Activated CD4-positive, alpha-beta memory T cell treated with anti-CD3 and anti-CD28 coated beads for 36 hours (primary cell): ENCODE measurements at regions of chr7 and their contacts with region 1.

Region 1: DNA sequence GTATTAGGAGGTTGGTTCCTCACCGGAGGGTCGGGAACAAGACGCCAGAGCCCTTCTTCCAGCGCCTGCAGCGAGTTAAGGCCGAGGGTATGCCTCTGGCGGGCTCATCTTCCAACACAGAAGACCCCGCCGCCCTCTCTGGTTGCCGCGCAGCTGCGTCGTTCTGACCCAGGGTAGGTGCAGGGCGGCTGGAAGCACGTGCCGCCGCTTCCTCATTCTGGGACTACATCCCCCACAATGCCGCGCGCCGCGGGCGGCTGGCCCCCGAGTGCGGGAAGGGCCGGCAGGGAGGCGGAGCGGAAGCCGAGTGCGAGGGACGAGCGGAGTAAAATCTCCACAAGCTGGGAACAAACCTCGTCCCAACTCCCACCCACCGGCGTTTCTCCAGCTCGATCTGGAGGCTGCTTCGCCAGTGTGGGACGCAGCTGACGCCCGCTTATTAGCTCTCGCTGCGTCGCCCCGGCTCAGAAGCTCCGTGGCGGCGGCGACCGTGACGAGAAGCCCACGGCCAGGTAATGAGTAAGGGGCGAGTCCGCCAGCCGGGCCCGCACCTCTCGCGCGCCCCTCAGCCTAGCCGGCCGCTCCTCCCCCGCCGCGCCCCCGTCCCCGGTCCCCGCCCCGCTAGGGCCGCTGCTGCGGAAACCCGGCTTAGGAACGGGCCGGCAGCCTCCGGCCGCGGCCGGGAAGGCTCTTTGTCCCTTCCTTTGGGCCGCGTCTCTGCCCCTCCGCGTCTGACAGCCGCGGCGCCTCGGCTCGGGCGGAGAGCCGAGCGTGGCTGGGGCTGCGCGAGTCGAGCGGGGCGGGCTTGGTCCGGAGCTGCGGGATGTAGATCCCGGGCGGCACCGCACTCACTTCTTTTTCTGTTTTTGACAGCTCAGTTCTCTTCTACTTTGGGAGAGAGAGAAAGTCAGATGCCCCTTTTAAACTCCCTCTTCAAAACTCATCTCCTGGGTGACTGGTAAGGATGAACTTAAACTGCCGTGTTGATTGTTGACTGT is at the start of gene CCDC126:
- DNase-seq: peak; percentile 88
- H3K4me3 Mint-ChIP-seq: peak within 1 kb of the TSS; percentile 87
- H3K27ac Mint-ChIP-seq: peak within 1 kb of the TSS; percentile 64
- H3K4me1 Mint-ChIP-seq: peaks cover 61% of the 10 kb centered on the region
- H3K27me3 Mint-ChIP-seq: no peaks in the 10 kb centered on the region
- total RNA-seq, gene CCDC126: 5.2 to 5.7 TPM

Region 2: GRCh38 chr7:22675917-22676343 is 921.5 kb before region 1 on chr7:
- CTCF ChIA-PET with region 1: no interaction called
- POLR2A ChIA-PET with region 1: no interaction called
- intact Hi-C with region 1: loop called (anchors 5 kb)
- DNase-seq: peak; percentile 61
- H3K4me3 Mint-ChIP-seq: no peak overlapping the region
- H3K27ac Mint-ChIP-seq: peak overlapping the region; percentile 47
- H3K4me1 Mint-ChIP-seq: peaks cover 75% of the 10 kb centered on the region
- H3K27me3 Mint-ChIP-seq: no peaks in the 10 kb centered on the region

Region 3: GRCh38 chr7:23181684-23182553 is 415.5 kb before region 1 on chr7 and contains the start of gene NUP42:
- CTCF ChIA-PET with region 1: no interaction called
- POLR2A ChIA-PET with region 1: no interaction called
- intact Hi-C with region 1: loop called (anchors 5 kb)
- DNase-seq: peak; percentile 99
- H3K4me3 Mint-ChIP-seq: peak within 1 kb of the TSS; percentile 87
- H3K27ac Mint-ChIP-seq: peak within 1 kb of the TSS; percentile 95
- H3K4me1 Mint-ChIP-seq: peaks cover 31% of the 10 kb centered on the region
- H3K27me3 Mint-ChIP-seq: no peaks in the 10 kb centered on the region
- total RNA-seq, gene NUP42: 24.1 to 31.7 TPM

Region 4: DNA sequence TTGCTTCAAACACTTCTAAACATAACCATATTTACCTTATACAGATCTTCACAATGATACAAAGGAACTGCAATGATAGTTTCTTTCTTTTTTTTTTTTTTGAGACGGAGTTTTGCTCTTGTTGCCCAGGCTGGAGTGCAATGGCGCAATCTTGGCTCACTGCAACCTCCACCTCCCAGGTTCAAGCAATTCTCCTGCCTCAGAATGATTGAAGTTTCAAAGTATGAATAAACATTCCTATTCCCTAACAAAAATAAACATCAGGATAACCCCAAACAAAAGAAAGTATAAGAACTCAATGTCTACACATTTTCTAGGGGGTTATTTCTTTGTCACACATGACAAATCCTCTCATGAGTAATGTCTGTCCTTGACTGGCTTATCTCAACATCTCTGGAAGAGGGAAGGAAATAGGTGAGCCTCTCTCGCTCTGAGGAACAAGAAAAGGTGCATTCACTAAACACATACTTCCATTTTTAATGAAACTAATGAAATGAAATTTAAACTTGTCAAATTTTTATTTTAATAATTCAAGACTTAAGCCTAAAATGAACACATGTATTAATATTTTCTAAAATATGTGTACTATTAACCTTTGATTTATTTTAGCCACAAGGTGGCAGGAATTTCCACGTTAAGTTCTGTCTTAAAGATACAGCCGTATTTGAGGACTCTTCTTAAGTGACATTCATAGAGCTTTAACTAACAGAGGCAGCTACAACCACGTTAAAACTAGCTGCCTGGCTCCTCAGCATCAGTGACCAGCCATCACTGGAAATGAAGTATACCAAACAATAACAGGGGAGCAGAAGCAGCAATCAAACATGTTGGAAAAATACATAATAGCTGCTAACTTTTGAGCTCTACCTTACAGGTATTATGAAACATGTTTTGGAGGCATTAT is 240.0 kb before region 1 on chr7:
- CTCF ChIA-PET with region 1: no interaction called
- POLR2A ChIA-PET with region 1: no interaction called
- intact Hi-C with region 1: loop called (anchors 1 kb)
- DNase-seq: no peak
- H3K4me3 Mint-ChIP-seq: no peak overlapping the region
- H3K27ac Mint-ChIP-seq: no peak overlapping the region
- H3K4me1 Mint-ChIP-seq: peaks cover 20% of the 10 kb centered on the region
- H3K27me3 Mint-ChIP-seq: peaks cover 17% of the 10 kb centered on the region

Region 5: GRCh38 chr7:23474094-23474828 is 123.1 kb before region 1 on chr7:
- CTCF ChIA-PET with region 1: no interaction called
- POLR2A ChIA-PET with region 1: no interaction called
- intact Hi-C with region 1: loop called (anchors 5 kb)
- DNase-seq: peak; percentile 91
- H3K4me3 Mint-ChIP-seq: peak overlapping the region; percentile 63
- H3K27ac Mint-ChIP-seq: peak overlapping the region; percentile 42
- H3K4me1 Mint-ChIP-seq: peaks cover 27% of the 10 kb centered on the region
- H3K27me3 Mint-ChIP-seq: peaks cover 60% of the 10 kb centered on the region

Region 6: GRCh38 chr7:23893942-23894891 is 296.8 kb after region 1 on chr7:
- CTCF ChIA-PET with region 1: no interaction called
- POLR2A ChIA-PET with region 1: no interaction called
- intact Hi-C with region 1: loop called (anchors 10 kb)
- DNase-seq: peak; percentile 76
- H3K4me3 Mint-ChIP-seq: no peak overlapping the region
- H3K27ac Mint-ChIP-seq: peak overlapping the region; percentile 38
- H3K4me1 Mint-ChIP-seq: peaks cover 29% of the 10 kb centered on the region
- H3K27me3 Mint-ChIP-seq: peaks cover 7% of the 10 kb centered on the region